Activated naive CD4-positive, alpha-beta T cell treated with anti-CD3 and anti-CD28 coated beads for 36 hours (primary cell): ENCODE measurements at regions of chr3 and their contacts with region 1.

Region 1: DNA sequence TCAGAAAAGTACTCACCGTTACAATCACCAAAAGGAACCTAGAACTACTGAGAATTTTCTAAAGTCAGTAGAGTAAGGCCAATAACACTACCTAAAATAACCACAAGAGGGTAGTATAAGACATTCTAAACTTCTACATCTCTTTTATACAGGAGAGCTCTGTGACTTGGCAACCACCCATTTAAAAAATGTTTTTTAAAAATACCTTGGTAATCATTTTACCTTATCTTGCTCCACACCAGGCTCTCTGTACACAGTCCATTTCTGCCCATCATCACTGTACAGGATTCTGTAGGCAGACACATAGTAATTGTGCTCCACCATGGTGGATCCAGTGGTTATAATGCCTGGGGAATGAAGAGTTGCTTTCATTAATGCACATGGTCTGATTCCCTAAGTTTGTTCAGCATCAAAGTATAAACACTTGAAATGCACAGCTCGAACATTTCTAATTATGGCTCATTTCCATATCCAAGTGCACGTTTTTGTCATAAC is 54.5 kb downstream of the ST3GAL6 start:
- DNase-seq: no peak
- H3K4me3 Mint-ChIP-seq: no peak overlapping the region
- H3K27ac Mint-ChIP-seq: no peak overlapping the region
- H3K4me1 Mint-ChIP-seq: no peaks in the 10 kb centered on the region
- H3K27me3 Mint-ChIP-seq: no peaks in the 10 kb centered on the region

Region 2: DNA sequence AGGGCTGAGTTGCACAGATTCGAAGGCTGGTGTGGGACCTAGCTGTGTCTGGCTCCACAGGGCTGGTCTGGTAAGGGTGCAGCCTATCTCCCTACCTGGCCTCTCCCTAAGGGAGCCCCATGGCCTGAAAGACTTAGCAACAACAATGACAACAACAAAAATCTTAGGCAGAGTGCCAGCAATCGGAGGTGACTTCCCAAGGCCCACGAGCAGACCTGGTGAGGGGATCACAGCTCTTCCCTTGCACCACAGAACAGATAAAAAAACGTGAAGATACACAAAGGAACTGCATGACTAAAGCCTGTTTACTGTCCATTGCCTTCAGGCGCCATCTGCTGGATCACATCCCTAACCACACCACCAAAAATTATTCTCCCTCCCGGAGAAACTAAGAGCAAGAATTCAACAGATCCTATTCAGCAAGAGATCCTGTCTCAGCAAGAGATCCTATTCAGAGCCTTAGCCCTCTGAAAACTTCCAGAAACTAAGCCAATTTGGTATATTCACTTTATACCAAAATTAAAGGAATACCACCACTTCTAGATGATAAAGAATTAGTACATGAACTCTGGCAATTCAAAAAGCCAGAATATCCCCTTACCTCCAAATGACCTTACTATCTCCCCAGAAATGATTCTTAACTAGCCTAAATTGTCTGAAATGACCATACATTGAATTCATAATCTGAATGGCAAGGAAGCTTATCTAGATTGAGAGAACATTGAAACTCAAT is 488.0 kb before region 1 on chr3:
- CTCF ChIA-PET with region 1: no interaction called
- intact Hi-C with region 1: loop called (anchors 1 kb)
- DNase-seq: peak; percentile 57
- H3K4me3 Mint-ChIP-seq: no peak overlapping the region
- H3K27ac Mint-ChIP-seq: no peak overlapping the region
- H3K4me1 Mint-ChIP-seq: no peaks in the 10 kb centered on the region
- H3K27me3 Mint-ChIP-seq: peaks cover 16% of the 10 kb centered on the region

Region 3: GRCh38 chr3:98901392-98902350 is 84.1 kb after region 1 on chr3 and contains the start of gene DCBLD2:
- CTCF ChIA-PET with region 1: interaction called, 3 read pairs
- intact Hi-C with region 1: loop called (anchors 5 kb)
- DNase-seq: peak; percentile 95
- H3K4me3 Mint-ChIP-seq: peak within 1 kb of the TSS; percentile 83
- H3K27ac Mint-ChIP-seq: peak within 1 kb of the TSS; percentile 28
- H3K4me1 Mint-ChIP-seq: peaks cover 12% of the 10 kb centered on the region
- H3K27me3 Mint-ChIP-seq: peaks cover 2% of the 10 kb centered on the region
- total RNA-seq, gene DCBLD2: 1.3 to 2.1 TPM

Region 4: DNA sequence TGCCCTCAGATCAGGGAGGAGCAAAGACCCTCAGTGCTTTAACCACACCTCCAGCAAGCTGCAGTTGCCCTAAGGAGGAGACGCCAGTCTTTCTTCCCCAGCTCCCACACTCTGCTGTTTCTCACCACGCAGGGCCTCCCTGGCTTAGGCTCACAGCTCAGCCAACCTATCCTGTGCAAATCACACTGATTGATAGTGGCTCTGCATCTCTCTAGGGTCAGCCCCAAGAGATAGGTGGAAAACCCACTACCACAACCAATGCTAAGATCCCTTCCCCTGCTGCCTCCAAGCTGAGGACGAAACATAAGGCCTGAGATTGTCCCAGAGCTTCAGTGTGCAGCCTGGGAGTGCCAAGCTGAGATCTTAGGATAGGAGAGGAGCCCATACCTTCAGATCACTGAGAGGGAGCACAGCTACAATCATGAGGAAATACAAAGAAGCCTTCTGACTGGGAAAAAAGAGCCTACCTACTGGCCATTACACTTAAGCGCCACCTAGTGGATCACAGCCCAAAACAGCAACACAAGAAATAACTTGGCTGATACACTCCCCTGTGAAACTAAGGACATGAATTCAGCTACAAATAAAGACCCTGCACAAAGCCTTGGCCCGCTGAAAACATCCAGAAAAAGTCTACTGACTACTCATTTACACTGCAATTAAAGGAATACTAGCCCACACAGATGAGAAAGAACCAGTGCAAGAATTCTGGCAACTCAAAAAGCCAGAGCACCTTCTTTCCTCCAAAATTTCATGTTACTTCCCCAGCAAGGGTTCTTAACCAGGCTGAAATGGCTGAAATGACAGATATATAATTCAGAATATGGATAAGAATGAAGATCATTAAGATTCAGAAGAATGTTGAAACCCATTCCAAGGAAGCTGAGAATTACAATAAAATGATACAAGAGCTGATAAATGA is 355.4 kb after region 1 on chr3:
- CTCF ChIA-PET with region 1: interaction called, 6 read pairs
- intact Hi-C with region 1: loop called (anchors 1 kb)
- DNase-seq: peak; percentile 59
- H3K4me3 Mint-ChIP-seq: no peak overlapping the region
- H3K27ac Mint-ChIP-seq: no peak overlapping the region
- H3K4me1 Mint-ChIP-seq: no peaks in the 10 kb centered on the region
- H3K27me3 Mint-ChIP-seq: peaks cover 2% of the 10 kb centered on the region

Region 5: GRCh38 chr3:99199021-99199420 is 381.4 kb after region 1 on chr3:
- CTCF ChIA-PET with region 1: no interaction called
- intact Hi-C with region 1: no loop called
- DNase-seq: no peak
- H3K4me3 Mint-ChIP-seq: no peak overlapping the region
- H3K27ac Mint-ChIP-seq: no peak overlapping the region
- H3K4me1 Mint-ChIP-seq: no peaks in the 10 kb centered on the region
- H3K27me3 Mint-ChIP-seq: no peaks in the 10 kb centered on the region

Region 6: DNA sequence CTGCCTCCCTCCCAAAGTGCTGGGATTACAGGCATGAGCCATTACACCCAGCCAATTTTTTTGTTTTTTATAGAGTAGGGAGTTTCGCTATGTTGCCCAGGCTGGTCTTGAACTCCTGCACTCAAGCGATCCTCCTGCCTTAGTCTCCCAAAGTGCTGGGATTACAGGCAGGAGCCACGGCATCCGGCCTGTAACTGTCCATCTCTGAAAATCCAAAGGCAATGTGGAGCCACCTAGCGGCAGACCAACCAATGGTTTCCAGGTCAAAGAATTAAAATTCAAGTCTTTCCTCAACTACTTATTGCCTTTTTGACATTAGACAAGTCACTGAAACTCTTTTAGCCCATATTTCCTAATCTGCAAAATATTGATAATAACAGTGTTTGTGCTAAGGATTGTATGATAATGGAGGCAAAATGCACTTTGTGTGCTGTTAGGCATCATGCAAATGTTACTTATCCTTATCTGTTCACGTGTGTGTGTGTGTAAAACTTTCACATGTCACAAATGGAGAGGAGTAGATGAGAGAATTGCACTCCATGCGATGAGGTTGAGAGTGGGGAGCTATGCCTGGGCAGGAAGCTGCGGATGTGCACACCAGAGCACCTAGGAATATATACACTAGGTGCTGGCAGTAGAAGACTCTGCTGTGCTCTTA is 869.5 kb after region 1 on chr3:
- CTCF ChIA-PET with region 1: interaction called, 3 read pairs
- intact Hi-C with region 1: loop called (anchors 1 kb)
- DNase-seq: peak; percentile 71
- H3K4me3 Mint-ChIP-seq: no peak overlapping the region
- H3K27ac Mint-ChIP-seq: no peak overlapping the region
- H3K4me1 Mint-ChIP-seq: no peaks in the 10 kb centered on the region
- H3K27me3 Mint-ChIP-seq: peaks cover 10% of the 10 kb centered on the region

Region 7: GRCh38 chr3:99808151-99808794 is 990.7 kb after region 1 on chr3:
- CTCF ChIA-PET with region 1: interaction called, 3 read pairs
- intact Hi-C with region 1: loop called (anchors 5 kb)
- DNase-seq: peak; percentile 43
- H3K4me3 Mint-ChIP-seq: no peak overlapping the region
- H3K27ac Mint-ChIP-seq: no peak overlapping the region
- H3K4me1 Mint-ChIP-seq: no peaks in the 10 kb centered on the region
- H3K27me3 Mint-ChIP-seq: no peaks in the 10 kb centered on the region